ENCODE measurements at regions of chr5 and their contacts with region 1.

Region 1: DNA sequence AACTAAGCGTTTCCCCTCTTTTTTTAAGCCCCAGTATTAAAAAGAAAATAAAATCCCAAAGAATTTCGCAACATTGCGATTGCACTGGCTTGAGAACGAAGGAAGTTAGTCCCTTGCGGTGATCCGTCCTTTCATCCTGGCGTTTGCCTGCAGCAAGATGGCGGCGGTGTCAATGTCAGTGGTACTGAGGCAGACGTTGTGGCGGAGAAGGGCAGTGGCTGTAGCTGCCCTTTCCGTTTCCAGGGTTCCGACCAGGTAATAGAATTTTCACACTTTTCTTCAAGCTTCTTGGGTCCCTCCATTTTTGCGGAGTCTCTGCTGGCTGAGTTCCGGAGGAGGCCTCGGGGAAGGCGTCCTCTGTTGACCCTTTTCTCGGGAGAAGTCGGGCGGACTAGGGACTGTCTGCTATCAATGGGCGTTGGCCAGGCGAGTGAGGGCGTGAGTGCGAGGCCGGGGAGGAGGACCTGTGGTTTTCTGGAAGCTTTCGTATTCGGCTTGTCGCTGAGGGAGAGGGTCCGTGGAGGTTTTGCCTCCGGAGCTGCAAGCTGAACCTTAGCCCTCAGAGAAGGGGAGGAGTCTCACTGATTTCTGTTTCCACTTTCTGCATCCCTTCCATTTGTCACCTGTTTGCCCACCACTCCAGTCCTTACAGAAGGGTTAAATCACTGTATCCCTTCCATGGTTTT is at the start of gene NDUFS4:
- DNase-seq: peak; percentile 95
- ATAC-seq: peak; percentile 98
- H3K4me3 ChIP-seq: peak within 1 kb of the TSS; percentile 98
- H3K27ac ChIP-seq: peak within 1 kb of the TSS; percentile 79
- H3K4me1 ChIP-seq: no peaks in the 10 kb centered on the region; the same call in 1 of the 2 replicates
- H3K27me3 ChIP-seq: no peaks in the 10 kb centered on the region
- CTCF ChIP-seq: peak; percentile 8; the same call in 1 of the 2 replicates
- POLR2A ChIP-seq: peak; percentile 69
- RAD21 ChIP-seq: no peak
- total RNA-seq, gene NDUFS4: 34.2 and 60.0 TPM in 2 replicates

Region 2: DNA sequence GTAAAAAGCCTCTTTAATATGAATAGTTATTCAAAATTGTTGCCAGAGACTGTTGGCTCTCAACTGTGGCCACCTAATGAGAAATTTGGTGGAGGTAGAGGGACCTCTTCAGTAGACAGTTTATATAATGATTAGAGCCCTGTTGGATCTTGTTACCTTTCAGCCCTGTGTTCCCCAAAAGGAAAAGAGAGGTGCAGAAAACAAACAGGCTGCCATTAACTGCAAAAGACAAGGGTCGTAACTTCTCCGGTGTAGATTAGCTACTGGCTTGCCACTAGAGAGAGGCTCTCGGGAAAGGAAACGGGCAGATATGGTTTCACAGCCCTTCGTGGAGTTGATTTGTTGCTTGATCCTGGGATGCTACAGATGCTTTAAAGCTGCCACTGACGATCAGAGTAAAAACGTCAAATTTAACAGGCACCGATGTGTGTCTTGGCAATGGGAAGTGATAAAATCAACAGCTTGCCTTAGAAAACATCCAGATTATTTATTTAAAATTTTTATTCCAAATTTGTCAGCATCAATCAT is 72.4 kb before region 1 on chr5:
- CTCF ChIA-PET with region 1: no interaction called
- POLR2A ChIA-PET with region 1: no interaction called
- dilution Hi-C with region 1: no loop called
- in situ Hi-C with region 1: no loop called
- intact Hi-C with region 1: loop called (anchors 5 kb)
- DNase-seq: peak; percentile 20
- ATAC-seq: peak; percentile 21; the same call in 1 of the 2 replicates
- H3K4me3 ChIP-seq: no peak overlapping the region
- H3K27ac ChIP-seq: peak overlapping the region; percentile 4; the same call in 1 of the 2 replicates
- H3K4me1 ChIP-seq: peaks cover 15% of the 10 kb centered on the region
- H3K27me3 ChIP-seq: no peaks in the 10 kb centered on the region
- CTCF ChIP-seq: no peak
- POLR2A ChIP-seq: no peak
- RAD21 ChIP-seq: no peak

Measured in IMR-90 (cell line).